Activated CD4-positive, alpha-beta T cell treated with anti-CD3 and anti-CD28 coated beads for 36 hours (primary cell): ENCODE measurements at regions of chr12 and their contacts with region 1.

Region 1: DNA sequence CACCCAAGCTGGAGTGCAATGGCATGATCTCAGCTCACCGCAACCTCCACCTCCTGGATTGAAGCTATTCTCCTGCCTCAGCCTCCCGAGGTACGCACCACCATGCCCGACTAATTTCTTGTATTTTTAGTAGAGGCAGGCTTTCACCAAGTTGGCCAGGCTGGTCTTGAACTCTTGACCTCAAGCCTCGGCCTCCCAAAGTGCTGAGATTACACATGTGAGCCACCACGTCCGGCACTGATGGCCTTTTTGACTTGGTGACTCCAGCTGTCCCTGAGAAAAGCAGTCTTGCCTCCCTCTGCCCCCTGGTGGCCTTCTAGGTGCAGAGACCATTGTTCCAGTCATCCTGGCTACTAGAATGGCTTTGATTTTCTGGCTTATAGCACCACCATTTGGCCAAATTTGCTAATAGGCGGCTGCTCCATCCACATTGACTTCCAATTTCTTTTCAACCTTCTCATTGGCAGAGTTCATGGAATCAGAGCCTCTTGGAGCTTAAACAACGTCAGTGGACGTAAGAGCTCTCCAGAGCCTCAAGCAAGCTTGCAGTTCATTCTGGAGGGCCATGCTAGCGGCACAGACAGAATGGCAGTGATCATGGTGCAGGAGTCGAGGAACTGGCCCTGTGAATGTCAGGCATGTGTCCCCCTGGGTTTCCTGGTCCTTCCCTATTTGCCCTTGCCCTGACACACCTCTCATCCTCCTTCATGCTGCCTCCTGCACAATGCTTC is 25.4 kb upstream of the EIF4B start:
- DNase-seq: peak; percentile 89
- ATAC-seq: peak; percentile 95
- H3K4me3 Mint-ChIP-seq: no peak overlapping the region
- H3K27ac Mint-ChIP-seq: no peak overlapping the region
- H3K4me1 Mint-ChIP-seq: no peaks in the 10 kb centered on the region
- H3K27me3 Mint-ChIP-seq: peaks cover 26% of the 10 kb centered on the region

Region 2: GRCh38 chr12:52372216-52373154 is 608.4 kb before region 1 on chr12:
- CTCF ChIA-PET with region 1: interaction called, 3 read pairs
- POLR2A ChIA-PET with region 1: no interaction called
- intact Hi-C with region 1: loop called in 1 of 2 experiments (anchors 2 kb)
- DNase-seq: peak; percentile 76
- ATAC-seq: peak; percentile 47
- H3K4me3 Mint-ChIP-seq: no peak overlapping the region
- H3K27ac Mint-ChIP-seq: no peak overlapping the region
- H3K4me1 Mint-ChIP-seq: no peaks in the 10 kb centered on the region
- H3K27me3 Mint-ChIP-seq: peaks cover 4% of the 10 kb centered on the region

Region 3: GRCh38 chr12:52860063-52860823 is 120.6 kb before region 1 on chr12:
- CTCF ChIA-PET with region 1: no interaction called
- POLR2A ChIA-PET with region 1: no interaction called
- intact Hi-C with region 1: no loop called
- DNase-seq: no peak
- ATAC-seq: no peak
- H3K4me3 Mint-ChIP-seq: no peak overlapping the region
- H3K27ac Mint-ChIP-seq: no peak overlapping the region
- H3K4me1 Mint-ChIP-seq: no peaks in the 10 kb centered on the region
- H3K27me3 Mint-ChIP-seq: no peaks in the 10 kb centered on the region

Region 4: GRCh38 chr12:52870351-52871290 is 110.2 kb before region 1 on chr12:
- CTCF ChIA-PET with region 1: interaction called, 15 read pairs
- POLR2A ChIA-PET with region 1: no interaction called
- intact Hi-C with region 1: no loop called
- DNase-seq: peak; percentile 90
- ATAC-seq: peak; percentile 80
- H3K4me3 Mint-ChIP-seq: no peak overlapping the region
- H3K27ac Mint-ChIP-seq: no peak overlapping the region
- H3K4me1 Mint-ChIP-seq: peaks cover 22% of the 10 kb centered on the region
- H3K27me3 Mint-ChIP-seq: peaks cover 4% of the 10 kb centered on the region

Region 5: GRCh38 chr12:52884526-52885293 is 96.1 kb before region 1 on chr12:
- CTCF ChIA-PET with region 1: interaction called, 405 read pairs
- POLR2A ChIA-PET with region 1: interaction called, 3 read pairs
- intact Hi-C with region 1: loop called (anchors 1 kb)
- DNase-seq: peak; percentile 90
- ATAC-seq: peak; percentile 90
- H3K4me3 Mint-ChIP-seq: no peak overlapping the region
- H3K27ac Mint-ChIP-seq: no peak overlapping the region
- H3K4me1 Mint-ChIP-seq: peaks cover 7% of the 10 kb centered on the region
- H3K27me3 Mint-ChIP-seq: peaks cover 5% of the 10 kb centered on the region

Region 6: DNA sequence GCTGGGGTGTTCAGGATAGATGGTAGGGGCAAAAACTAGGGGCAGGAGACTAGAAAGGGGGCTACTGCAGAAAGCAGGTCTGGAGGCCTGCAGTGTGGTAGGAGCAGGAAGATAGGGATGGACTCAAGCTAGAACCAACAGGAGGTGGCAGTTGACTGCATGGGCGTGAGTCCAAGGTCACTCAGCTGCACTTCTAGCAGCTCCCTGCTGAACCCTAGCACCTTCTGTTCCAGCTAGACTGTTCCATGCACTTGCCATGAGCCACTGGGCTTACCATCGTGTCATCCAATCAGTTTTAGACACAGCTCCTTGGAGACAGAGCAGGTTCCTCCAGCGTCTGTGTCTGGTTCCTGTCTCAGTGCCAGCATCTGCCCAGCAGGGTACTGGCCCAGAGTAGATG is 64.6 kb before region 1 on chr12:
- CTCF ChIA-PET with region 1: interaction called, 14 read pairs
- POLR2A ChIA-PET with region 1: no interaction called
- intact Hi-C with region 1: no loop called
- DNase-seq: no peak
- ATAC-seq: no peak
- H3K4me3 Mint-ChIP-seq: no peak overlapping the region
- H3K27ac Mint-ChIP-seq: no peak overlapping the region
- H3K4me1 Mint-ChIP-seq: no peaks in the 10 kb centered on the region
- H3K27me3 Mint-ChIP-seq: peaks cover 2% of the 10 kb centered on the region